WTC11 (cell line): ENCODE measurements at regions of chr9 and their contacts with region 1.

Region 1: DNA sequence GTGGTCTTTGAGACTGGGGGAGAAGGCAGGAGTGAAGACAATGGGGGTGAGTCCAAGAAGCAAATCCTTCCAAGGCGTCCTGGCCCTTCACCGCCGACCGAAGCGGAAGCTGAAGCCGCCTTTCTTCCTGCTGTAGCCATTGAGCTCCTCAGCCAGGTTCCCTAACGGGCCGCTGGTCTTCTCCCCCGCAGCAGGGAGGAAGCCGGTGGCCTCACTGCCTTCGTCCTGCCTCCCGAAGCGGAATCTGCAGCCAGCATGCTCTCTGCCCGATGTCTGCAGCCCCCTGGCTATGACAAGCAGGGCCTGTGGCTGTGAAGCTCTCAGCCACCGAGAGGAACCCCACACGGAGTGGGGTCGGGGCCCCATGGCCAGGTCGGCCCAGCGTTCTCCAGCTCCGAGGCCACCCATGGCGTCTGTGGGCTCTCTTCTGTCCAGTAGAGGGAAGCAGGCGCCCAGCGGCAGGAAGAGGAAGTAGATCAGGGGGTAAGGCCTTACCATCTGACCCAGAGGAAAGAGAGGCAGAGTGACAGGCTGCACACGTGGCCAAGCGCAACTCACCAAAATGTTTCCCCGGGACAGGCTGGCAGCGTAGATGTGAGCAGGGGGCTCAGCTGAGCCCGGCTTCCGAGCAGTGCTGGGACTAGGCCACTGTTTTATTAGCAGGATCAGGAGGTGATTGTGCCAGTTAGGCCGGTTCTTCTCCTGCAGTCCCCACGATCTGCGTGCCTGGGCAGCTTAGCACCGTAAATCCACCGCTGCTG is 3.1 kb downstream of the QRFP start:
- DNase-seq: peak; percentile 51
- ATAC-seq: peak; percentile 63
- H3K4me3 Mint-ChIP-seq: no peak overlapping the region
- H3K27ac Mint-ChIP-seq: peak overlapping the region; percentile 60; the same call in 1 of the 2 replicates
- H3K4me1 Mint-ChIP-seq: no peaks in the 10 kb centered on the region
- H3K27me3 Mint-ChIP-seq: no peaks in the 10 kb centered on the region
- CTCF ChIP-seq: no peak

Region 2: DNA sequence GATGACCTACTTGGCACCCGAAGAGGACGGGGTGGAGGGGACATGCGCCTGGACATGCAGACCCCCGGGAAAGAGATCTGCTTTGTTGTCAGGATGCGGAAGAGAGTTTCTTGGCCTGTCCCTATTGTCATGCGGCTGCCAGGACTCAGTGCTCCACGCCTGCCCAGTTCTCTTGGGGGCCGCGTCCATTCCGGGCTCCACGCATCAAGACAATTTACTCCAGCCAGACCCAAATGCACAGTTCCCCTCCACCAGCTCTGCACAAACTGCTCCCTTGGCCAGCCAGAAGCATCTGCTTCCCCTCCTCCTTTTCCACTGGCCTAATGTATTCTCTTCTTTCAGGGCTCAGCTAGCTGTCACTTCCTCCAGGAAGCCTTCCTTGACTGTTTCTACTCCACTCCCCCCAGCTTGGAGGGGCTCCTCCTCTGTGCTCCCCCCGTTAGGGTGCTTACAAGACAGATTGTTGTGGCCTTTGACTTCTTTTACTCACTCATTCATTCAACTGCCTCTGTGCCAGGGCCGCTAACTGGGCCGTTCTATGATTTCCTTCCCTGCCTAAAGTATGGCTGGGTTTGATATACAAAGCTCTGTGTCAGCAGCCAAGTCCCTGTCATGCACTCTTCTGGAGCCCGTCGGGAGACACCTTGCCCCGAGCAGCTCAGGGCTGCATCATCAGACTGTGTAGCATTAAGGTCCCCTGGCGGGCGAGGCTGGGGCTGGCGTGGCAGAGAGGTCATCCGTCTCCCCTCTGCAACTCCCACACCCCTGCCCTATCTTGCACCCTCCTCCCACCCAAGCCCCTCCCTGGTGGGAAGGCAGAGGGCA is 38.9 kb after region 1 on chr9:
- CTCF ChIA-PET with region 1: interaction called, 19 read pairs
- POLR2A ChIA-PET with region 1: no interaction called
- DNase-seq: peak; percentile 35
- ATAC-seq: peak; percentile 29
- H3K4me3 Mint-ChIP-seq: 0 out of 2 replicates have a peak overlapping the region, but pooled peaks have one; percentile 0
- H3K27ac Mint-ChIP-seq: peak overlapping the region; percentile 80
- H3K4me1 Mint-ChIP-seq: peaks cover 47% of the 10 kb centered on the region
- H3K27me3 Mint-ChIP-seq: peaks cover 11% of the 10 kb centered on the region
- CTCF ChIP-seq: no peak

Region 3: GRCh38 chr9:130940693-130941576 is 47.4 kb after region 1 on chr9:
- CTCF ChIA-PET with region 1: interaction called, 14 read pairs
- POLR2A ChIA-PET with region 1: no interaction called
- DNase-seq: peak; percentile 98
- ATAC-seq: peak; percentile 76
- H3K4me3 Mint-ChIP-seq: peak overlapping the region; percentile 61
- H3K27ac Mint-ChIP-seq: no peak overlapping the region; the same call in 1 of the 2 replicates
- H3K4me1 Mint-ChIP-seq: peaks cover 26% of the 10 kb centered on the region
- H3K27me3 Mint-ChIP-seq: peaks cover 50% of the 10 kb centered on the region
- CTCF ChIP-seq: peak; percentile 71

Region 4: DNA sequence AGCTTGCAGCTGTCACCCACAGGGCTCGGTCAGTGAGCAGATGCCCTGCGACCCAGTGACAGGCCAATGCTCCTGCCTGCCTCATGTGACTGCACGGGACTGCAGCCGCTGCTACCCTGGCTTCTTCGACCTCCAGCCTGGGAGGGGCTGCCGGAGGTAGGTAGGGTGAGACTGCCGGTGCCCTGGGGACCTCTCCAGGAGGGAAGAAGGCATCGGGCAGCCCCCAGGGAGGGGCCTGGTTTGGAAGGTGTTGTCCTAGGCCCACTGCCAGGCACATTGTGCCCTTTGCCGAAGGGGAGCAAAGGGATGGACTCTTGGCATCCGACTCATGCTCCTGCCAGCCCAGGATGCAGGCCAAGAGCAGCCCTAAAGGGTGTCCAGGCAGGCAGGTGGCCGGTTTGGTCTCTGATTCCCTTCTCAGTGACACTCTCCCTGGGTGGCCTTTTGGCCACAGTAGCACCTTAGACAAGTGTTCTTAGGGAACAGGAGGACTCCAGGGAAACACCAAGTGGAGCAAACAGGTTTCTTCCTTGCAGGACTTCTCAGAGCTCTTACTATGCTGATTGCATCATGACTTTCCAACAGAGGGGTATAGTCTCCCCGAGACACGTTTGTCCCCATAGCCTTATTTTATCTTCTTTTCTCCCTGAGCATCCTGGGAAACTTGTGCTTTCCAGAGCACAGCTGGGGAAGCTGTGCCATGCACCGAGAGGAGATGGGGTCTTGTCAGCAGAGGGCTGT is 174.7 kb after region 1 on chr9:
- CTCF ChIA-PET with region 1: no interaction called
- POLR2A ChIA-PET with region 1: no interaction called
- DNase-seq: no peak
- ATAC-seq: no peak
- H3K4me3 Mint-ChIP-seq: no peak overlapping the region
- H3K27ac Mint-ChIP-seq: no peak overlapping the region
- H3K4me1 Mint-ChIP-seq: no peaks in the 10 kb centered on the region
- H3K27me3 Mint-ChIP-seq: no peaks in the 10 kb centered on the region
- CTCF ChIP-seq: no peak